HCT116 (cell line): ENCODE measurements at regions of chr18 and their contacts with region 1.

Region 1: GRCh38 chr18:4283746-4284291 is 171.3 kb downstream of the DLGAP1 start:
- DNase-seq: no peak
- ATAC-seq: no peak
- H3K4me3 ChIP-seq: no peak overlapping the region
- H3K27ac ChIP-seq: no peak overlapping the region
- H3K4me1 ChIP-seq: no peaks in the 10 kb centered on the region
- H3K27me3 ChIP-seq: no peaks in the 10 kb centered on the region
- CTCF ChIP-seq: no peak
- POLR2A ChIP-seq: no peak
- RAD21 ChIP-seq: no peak

Region 2: DNA sequence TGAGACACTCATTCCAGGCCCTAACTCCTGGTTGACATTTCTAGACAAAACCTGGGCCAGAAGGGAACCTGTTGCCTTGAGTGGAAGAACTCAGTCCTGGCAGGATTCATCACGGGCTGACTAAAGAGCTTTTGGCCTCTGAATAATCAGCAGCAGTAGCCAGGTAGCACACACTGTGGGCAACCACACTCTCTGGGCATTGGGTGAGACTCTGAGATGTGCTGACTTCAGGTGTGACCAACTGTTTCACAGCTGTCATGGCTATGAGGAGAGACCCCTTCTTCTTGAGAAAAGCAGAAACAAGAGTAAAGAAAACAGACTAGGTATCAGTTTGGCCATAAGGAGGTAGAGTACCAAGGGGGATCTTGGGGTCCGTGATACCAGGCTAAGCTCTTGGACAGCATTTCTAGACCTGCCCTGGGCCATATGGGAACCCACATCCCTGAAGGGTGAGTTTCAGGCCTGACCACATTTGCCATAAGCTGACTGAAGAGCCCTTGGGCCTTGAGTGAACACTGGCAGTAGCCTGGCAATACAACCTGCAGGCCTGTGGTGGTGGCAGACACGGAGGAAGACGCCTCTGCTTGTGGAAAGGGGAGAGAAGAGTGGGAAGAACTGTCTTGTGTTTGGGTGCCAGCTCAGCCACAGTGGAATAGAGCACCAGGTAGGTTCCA is 59.7 kb before region 1 on chr18:
- CTCF ChIA-PET with region 1: no interaction called
- POLR2A ChIA-PET with region 1: no interaction called
- RAD21 ChIA-PET with region 1: no interaction called
- intact Hi-C with region 1: loop called (anchors 10 kb)
- DNase-seq: no peak
- ATAC-seq: no peak
- H3K4me3 ChIP-seq: no peak overlapping the region
- H3K27ac ChIP-seq: no peak overlapping the region
- H3K4me1 ChIP-seq: no peaks in the 10 kb centered on the region
- H3K27me3 ChIP-seq: no peaks in the 10 kb centered on the region
- CTCF ChIP-seq: no peak
- POLR2A ChIP-seq: no peak
- RAD21 ChIP-seq: no peak

Region 3: DNA sequence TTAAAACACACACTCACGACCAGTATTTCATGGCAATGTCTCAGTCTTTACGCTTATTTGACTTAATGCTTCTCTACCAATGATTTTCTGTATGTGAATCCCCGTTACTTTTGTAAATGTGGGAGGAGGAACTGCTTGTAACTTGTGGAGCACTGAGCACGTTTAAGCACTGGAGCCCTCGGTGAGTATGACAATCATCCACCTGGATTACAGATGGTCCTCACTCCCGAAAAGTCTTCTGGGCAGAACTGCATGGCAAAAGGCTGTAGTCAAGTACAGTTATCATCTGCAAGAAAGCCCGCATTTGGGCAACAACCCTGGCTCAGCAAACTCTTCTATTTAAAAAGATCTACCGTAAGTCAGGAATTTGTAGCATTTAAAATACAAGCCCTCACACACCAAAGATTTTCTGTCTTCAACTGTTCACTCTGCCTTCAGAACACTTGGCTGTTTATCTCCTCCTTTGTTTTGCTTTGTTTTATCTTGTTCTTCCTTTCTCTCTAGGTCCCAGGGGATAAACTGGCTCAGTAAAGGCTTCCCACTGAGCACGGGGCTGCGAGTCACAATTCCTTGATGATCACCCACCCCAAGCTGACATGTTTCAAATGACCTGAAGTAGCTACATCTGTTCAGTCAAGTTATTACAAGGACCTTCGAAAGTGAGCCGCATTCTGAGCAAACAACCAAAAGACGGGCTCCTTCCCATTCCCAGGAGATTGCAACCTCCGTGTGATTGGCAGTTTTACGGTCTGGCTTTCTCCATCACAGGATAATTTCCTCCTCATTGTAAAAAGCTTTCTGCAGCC is 69.1 kb after region 1 on chr18:
- CTCF ChIA-PET with region 1: no interaction called
- POLR2A ChIA-PET with region 1: no interaction called
- RAD21 ChIA-PET with region 1: no interaction called
- intact Hi-C with region 1: loop called (anchors 5 kb)
- DNase-seq: no peak
- ATAC-seq: no peak
- H3K4me3 ChIP-seq: no peak overlapping the region
- H3K27ac ChIP-seq: no peak overlapping the region
- H3K4me1 ChIP-seq: no peaks in the 10 kb centered on the region
- H3K27me3 ChIP-seq: no peaks in the 10 kb centered on the region
- CTCF ChIP-seq: no peak
- POLR2A ChIP-seq: no peak
- RAD21 ChIP-seq: no peak